ENCODE measurements at regions of chr18 and their contacts with region 1.

Region 1: DNA sequence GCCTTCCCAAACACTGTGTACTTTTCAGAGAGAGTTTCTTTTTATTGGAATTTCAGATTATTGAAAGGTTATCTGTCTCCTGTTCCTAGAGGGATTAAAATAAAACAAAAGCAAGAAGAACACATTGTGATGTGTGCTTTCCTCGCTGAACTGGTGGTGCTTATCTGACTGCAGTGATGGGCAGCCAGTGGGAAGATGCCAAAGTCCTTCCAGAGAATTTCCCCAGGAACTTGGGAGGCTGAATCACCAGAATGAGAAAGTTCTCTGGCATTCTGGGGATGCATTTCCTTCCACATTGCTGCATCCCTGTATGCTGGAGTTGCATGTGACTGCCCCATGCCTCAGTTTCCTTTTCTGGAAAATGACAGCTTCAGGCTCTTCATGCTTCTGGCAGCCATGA is 53.9 kb upstream of the SEC11C start:
- DNase-seq: no peak
- H3K4me3 ChIP-seq: no peak overlapping the region
- H3K27ac ChIP-seq: peak overlapping the region in 1 of 2 experiments; percentile 31; a peak in 1 of 4 replicates
- H3K4me1 ChIP-seq: peaks cover 2 to 21% of the 10 kb centered on the region in 2 experiments; a peak in 3 of 4 replicates
- H3K27me3 ChIP-seq: no peaks in the 10 kb centered on the region
- CTCF ChIP-seq: no peak
- EP300 ChIP-seq: no peak
- RAD21 ChIP-seq: no peak

Region 2: DNA sequence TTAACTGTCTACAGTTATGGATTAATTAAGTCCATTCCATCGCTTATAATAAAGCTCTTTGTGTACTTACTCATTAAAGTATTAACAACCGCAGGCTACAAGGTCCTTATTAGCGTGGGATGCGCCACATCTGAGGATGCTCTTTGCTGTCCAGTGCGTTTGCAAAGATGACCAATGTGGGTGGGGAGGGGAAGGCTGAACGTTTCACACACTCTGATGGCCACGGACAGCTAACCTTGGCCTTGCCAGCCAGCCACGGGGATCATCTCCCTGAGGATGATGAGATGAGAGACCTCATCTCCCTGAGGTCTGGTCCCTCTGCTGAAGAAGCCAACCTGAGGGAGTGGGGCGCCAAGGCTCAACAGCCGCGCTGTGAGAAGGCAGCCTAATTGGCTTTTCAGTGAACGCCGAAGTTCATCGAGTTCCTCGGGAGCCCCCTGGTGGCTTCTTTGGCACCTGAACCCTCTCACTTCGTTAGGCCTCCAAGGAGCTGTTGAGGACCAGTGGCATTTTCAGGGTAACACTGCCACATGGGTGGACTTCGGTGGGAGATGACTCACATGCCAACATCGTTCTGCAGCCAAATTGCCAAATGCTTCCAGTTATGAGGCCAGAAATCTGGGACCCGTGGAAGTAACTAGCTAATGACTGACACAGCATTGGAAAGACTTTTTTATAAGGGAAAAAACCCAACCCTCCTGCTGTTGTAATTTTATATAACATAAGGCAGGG is 15.4 kb before region 1 on chr18:
- CTCF ChIA-PET with region 1: interaction called, 98 read pairs
- POLR2A ChIA-PET with region 1: no interaction called
- DNase-seq: peak; percentile 75
- H3K4me3 ChIP-seq: peak overlapping the region in 1 of 2 experiments; percentile 17; a peak in 1 of 4 replicates
- H3K27ac ChIP-seq: no peak overlapping the region
- H3K4me1 ChIP-seq: peaks cover 0 to 2% of the 10 kb centered on the region in 2 experiments; a peak in 1 of 4 replicates
- H3K27me3 ChIP-seq: no peaks in the 10 kb centered on the region
- CTCF ChIP-seq: peak; percentile 89
- EP300 ChIP-seq: no peak
- RAD21 ChIP-seq: peak; percentile 87

Region 3: DNA sequence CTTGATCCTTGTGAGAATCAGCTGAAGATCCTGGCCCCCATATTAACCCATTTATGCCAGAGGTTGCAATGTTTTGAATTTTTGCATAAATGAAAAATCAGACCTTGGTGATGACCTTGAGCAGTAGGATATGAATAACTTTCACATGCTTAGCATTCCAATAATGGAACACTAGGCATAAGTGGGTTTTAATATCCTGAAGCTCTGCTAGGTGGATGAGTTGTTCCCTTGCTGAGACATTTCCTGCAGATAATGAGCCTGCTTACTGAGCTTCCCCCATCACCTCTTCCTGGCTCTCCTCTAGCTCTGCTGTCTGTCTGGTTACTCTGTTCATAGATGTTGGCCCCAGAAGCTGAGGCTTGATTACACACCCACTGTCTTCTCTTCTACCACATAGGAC is 28.4 kb after region 1 on chr18:
- CTCF ChIA-PET with region 1: interaction called, 11 read pairs
- POLR2A ChIA-PET with region 1: no interaction called
- DNase-seq: no peak
- H3K4me3 ChIP-seq: no peak overlapping the region
- H3K27ac ChIP-seq: no peak overlapping the region; a peak in 1 of 4 replicates
- H3K4me1 ChIP-seq: peaks cover 6 to 13% of the 10 kb centered on the region in 2 experiments; a peak in 3 of 4 replicates
- H3K27me3 ChIP-seq: no peaks in the 10 kb centered on the region
- CTCF ChIP-seq: no peak
- EP300 ChIP-seq: no peak
- RAD21 ChIP-seq: no peak

Region 4: DNA sequence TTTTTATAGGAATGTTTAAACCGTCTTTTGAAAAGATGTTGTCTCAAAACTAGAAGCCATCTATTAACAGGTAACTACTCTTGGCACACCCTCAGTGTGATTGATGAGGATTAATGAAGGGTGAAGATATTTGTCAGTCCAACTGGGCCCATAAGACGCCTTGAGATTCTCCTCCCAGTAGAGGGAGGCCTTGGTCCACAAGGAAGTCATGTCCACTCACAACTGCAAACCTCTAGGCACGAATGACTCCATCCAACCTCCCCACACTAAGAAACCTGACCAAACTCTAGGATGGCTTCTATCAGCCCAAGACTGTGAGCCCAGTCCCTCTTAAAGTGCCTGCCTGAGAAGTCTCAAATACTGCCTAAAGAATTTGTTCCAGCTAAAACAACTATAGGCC is 115.0 kb after region 1 on chr18:
- CTCF ChIA-PET with region 1: no interaction called
- POLR2A ChIA-PET with region 1: no interaction called
- DNase-seq: no peak
- H3K4me3 ChIP-seq: no peak overlapping the region
- H3K27ac ChIP-seq: no peak overlapping the region
- H3K4me1 ChIP-seq: no peaks in the 10 kb centered on the region
- H3K27me3 ChIP-seq: peaks cover 18% of the 10 kb centered on the region; the same call in 1 of the 2 replicates
- CTCF ChIP-seq: peak; percentile 47
- EP300 ChIP-seq: no peak
- RAD21 ChIP-seq: peak; percentile 36